CD8-positive, alpha-beta T cell (primary cell): ENCODE measurements at regions of chr15 and their contacts with region 1.

Region 1: DNA sequence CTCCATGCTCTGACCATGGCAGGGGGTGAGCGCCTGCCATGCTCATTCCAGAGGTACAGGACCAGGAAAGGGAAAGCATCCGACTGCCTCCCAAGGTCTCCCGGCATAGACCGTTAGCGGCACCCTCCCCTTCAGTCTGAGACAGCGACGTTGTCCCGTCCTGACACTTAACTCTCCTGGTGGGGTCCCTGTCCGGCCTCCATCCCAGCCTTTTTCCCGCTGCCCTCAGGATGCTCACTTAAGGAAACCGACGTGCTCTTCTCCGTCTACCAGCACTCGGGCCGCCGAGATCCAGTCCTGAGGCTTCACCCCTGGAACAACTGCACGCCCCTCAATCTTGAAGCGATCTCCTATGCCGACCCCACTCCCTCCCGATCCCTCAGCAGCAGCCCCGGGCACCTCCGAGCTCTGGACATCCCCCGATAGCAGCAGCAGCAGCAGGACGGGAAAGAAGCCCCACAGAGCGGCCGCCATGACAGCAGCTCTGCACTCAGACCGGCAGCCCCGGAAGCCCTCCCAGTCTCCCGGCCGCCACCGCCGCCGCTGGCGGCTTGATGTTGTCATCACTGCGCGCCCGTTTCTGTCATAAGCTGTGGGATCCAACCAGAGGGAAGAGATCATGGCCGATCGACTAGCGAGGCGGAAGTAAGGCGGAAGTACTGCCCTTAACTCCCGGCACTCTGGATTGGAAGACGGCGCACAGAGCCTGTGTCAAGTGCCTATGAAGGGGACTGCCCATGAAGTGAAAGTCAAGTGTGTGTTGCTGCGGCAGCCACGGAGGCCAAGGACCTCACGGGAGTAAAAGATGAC is at the starts of genes EMC7 and PGBD4:
- DNase-seq: peak; percentile 98 to 100 (median 99)
- ATAC-seq: peak; percentile 96
- H3K4me3 ChIP-seq: peak within 1 kb of the TSS; percentile 88 to 97
- H3K4me3 Mint-ChIP-seq: peak within 1 kb of the TSS; percentile 97
- H3K27ac ChIP-seq: peak within 1 kb of the TSS; percentile 95 to 97
- H3K27ac Mint-ChIP-seq: peak within 1 kb of the TSS; percentile 96
- H3K4me1 ChIP-seq: peaks cover 29% of the 10 kb centered on the region
- H3K4me1 Mint-ChIP-seq: peaks cover 40% of the 10 kb centered on the region
- H3K27me3 ChIP-seq: no peaks in the 10 kb centered on the region
- H3K27me3 Mint-ChIP-seq: no peaks in the 10 kb centered on the region
- CTCF ChIP-seq: no peak
- total RNA-seq, gene EMC7: 61.0 to 78.9 TPM
- total RNA-seq, gene PGBD4: 1.8 to 2.4 TPM

Region 2: DNA sequence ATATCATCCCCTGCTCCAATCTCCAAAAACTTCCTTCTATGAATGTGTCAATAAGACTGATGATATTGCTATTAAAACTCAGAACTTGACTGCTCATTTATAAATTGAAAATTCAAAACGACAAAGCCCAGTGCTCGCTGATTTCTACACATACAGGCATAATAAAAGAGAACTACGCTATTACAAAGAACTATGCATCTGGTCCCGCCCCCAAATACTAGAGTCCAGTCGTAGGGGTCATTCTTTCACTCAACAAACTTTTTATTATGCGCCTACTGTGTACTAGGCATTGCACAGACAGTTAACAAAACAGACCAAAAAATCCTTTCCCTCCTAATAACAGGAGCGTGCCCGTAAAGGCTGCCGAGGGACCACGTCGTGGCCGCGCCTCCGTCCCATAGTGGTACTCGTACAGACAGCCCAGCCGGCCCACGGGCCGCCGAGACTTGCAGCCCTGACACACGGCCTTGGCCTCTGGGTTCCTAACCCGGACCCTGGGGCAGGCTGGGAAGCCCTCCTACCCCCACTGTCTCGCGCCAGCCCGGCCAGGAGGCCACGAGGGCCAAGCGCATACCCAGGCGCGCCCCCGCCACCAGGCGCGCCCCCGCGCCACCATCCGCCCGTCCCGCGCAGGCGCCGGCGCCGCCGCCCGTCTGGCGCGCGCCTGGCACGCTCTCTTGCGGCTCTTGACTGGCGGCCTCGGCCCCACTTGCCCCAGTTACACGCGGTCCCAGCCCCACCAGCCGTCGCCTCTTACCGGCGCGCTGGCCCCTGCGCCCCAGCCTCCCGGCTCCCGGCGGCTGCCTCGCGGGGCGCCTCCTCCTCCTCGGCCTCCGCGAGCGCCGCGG is 63.3 kb before region 1 on chr15:
- CTCF ChIA-PET with region 1: no interaction called
- POLR2A ChIA-PET with region 1: interaction called, 14 read pairs
- intact Hi-C with region 1: loop called (anchors 1 to 2 kb)
- DNase-seq: peak; percentile 44 to 89 (median 73)
- ATAC-seq: peak; percentile 84
- H3K4me3 ChIP-seq: peak overlapping the region; percentile 78 to 97
- H3K4me3 Mint-ChIP-seq: peak overlapping the region; percentile 94
- H3K27ac ChIP-seq: peak overlapping the region; percentile 75 to 88
- H3K27ac Mint-ChIP-seq: peak overlapping the region; percentile 94
- H3K4me1 ChIP-seq: peaks cover 19% of the 10 kb centered on the region
- H3K4me1 Mint-ChIP-seq: peaks cover 20% of the 10 kb centered on the region
- H3K27me3 ChIP-seq: no peaks in the 10 kb centered on the region
- H3K27me3 Mint-ChIP-seq: no peaks in the 10 kb centered on the region
- CTCF ChIP-seq: no peak

Region 3: DNA sequence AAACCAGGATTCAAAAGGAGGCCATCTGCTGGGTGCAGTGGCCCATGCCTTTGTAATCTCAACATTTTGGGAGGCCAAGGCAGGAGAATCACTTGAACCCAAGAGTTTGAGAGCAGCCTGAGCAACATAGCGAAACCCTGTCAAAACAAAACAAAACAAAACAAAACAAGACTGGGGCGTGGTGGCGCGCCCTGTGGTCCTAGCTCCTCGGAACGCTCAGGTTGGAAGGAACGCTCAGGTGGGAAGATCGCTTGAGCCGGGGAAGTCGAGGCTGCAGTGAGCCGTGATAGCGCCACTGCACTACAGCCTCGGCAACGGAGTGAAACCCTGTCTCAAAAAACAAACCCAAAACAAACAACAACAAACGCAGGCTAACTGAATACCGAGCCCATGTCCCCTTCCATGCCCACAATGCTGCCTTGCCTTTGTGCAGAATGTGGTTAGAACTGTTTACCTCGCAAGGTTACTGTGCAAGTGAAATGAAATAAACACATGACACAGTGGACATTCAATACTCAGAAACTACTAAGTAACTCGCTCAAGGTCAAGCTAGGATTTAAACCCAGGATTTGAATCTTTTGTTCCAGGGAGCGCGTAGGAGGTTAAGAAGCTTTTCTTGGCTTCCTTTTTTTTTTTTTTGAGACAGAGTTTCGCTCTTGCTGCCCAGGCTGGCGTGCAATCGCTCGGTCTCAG is 122.5 kb after region 1 on chr15:
- CTCF ChIA-PET with region 1: interaction called, 3 read pairs
- POLR2A ChIA-PET with region 1: interaction called, 18 read pairs
- intact Hi-C with region 1: loop called (anchors 1 kb)
- DNase-seq: peak in 2 of 9 experiments; percentile 11 to 34
- ATAC-seq: no peak
- H3K4me3 ChIP-seq: peak overlapping the region; percentile 53 to 86
- H3K4me3 Mint-ChIP-seq: peak overlapping the region; percentile 93
- H3K27ac ChIP-seq: peak overlapping the region; percentile 75 to 93
- H3K27ac Mint-ChIP-seq: peak overlapping the region; percentile 99
- H3K4me1 ChIP-seq: peaks cover 15% of the 10 kb centered on the region
- H3K4me1 Mint-ChIP-seq: peaks cover 29% of the 10 kb centered on the region
- H3K27me3 ChIP-seq: no peaks in the 10 kb centered on the region
- H3K27me3 Mint-ChIP-seq: no peaks in the 10 kb centered on the region
- CTCF ChIP-seq: no peak

Region 4: DNA sequence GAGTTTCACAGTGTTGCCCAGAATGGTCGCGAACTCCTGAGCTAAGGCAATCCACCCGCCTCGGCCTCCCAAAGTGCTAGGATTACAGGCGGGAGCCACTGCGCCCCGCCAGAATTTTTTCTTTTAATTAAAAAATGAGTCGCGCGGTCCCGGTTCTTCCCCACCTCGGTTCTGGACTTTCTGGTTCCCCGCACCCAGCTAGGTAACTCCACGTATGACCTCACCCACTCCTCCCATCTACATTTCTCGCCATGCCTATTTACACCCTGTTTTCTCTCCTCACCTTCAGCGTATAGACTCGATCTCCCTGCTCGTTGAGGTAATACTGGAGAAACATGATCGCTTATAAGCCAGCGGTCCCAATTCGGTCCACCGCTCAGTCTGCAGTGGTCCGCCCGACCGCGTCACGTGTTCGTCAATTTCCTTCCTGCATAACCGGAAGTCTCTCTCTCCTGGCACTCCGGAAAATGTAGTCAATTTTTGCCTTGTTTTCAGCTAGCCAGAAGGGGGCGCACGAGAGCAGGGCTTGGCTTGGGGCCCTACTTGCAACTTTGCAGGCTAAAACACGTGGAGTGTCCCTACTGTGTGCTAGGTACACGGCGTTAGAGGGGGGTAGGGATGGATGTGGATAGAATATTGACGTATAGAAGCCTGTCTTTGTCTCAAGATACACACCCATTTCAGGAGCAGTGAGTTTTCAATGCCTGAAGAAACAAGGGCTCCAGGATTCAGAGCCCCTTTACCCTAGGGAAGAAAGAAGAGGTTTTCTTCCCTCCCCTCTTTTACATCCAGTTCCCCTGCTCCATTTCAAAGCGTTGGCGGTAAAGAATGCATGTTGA is 241.4 kb after region 1 on chr15 and contains the starts of genes NOP10 and NUTM1:
- CTCF ChIA-PET with region 1: interaction called, 4 read pairs
- POLR2A ChIA-PET with region 1: no interaction called
- intact Hi-C with region 1: loop called (anchors 2 kb)
- DNase-seq: peak; percentile 87 to 96 (median 93)
- ATAC-seq: peak; percentile 83
- H3K4me3 ChIP-seq: peak within 1 kb of the TSS; percentile 88 to 90
- H3K4me3 Mint-ChIP-seq: no peak within 1 kb of the TSS
- H3K27ac ChIP-seq: peak within 1 kb of the TSS; percentile 82 to 90
- H3K27ac Mint-ChIP-seq: peak within 1 kb of the TSS; percentile 85
- H3K4me1 ChIP-seq: peaks cover 20% of the 10 kb centered on the region
- H3K4me1 Mint-ChIP-seq: peaks cover 24% of the 10 kb centered on the region
- H3K27me3 ChIP-seq: no peaks in the 10 kb centered on the region
- H3K27me3 Mint-ChIP-seq: no peaks in the 10 kb centered on the region
- CTCF ChIP-seq: peak; percentile 90
- total RNA-seq, gene NOP10: 36.6 to 40.1 TPM
- total RNA-seq, gene NUTM1: not detected

Region 5: GRCh38 chr15:34587717-34588674 is 486.4 kb after region 1 on chr15:
- CTCF ChIA-PET with region 1: no interaction called
- POLR2A ChIA-PET with region 1: interaction called, 3 read pairs
- intact Hi-C with region 1: loop called in 1 of 2 experiments (anchors 5 kb)
- DNase-seq: peak; percentile 23 to 79 (median 62)
- ATAC-seq: peak; percentile 65
- H3K4me3 ChIP-seq: no peak overlapping the region
- H3K4me3 Mint-ChIP-seq: peak overlapping the region; percentile 72
- H3K27ac ChIP-seq: no peak overlapping the region
- H3K27ac Mint-ChIP-seq: peak overlapping the region; percentile 62
- H3K4me1 ChIP-seq: peaks cover 5% of the 10 kb centered on the region
- H3K4me1 Mint-ChIP-seq: peaks cover 8% of the 10 kb centered on the region
- H3K27me3 ChIP-seq: no peaks in the 10 kb centered on the region
- H3K27me3 Mint-ChIP-seq: peaks cover 18% of the 10 kb centered on the region
- CTCF ChIP-seq: peak; percentile 83

Region 6: DNA sequence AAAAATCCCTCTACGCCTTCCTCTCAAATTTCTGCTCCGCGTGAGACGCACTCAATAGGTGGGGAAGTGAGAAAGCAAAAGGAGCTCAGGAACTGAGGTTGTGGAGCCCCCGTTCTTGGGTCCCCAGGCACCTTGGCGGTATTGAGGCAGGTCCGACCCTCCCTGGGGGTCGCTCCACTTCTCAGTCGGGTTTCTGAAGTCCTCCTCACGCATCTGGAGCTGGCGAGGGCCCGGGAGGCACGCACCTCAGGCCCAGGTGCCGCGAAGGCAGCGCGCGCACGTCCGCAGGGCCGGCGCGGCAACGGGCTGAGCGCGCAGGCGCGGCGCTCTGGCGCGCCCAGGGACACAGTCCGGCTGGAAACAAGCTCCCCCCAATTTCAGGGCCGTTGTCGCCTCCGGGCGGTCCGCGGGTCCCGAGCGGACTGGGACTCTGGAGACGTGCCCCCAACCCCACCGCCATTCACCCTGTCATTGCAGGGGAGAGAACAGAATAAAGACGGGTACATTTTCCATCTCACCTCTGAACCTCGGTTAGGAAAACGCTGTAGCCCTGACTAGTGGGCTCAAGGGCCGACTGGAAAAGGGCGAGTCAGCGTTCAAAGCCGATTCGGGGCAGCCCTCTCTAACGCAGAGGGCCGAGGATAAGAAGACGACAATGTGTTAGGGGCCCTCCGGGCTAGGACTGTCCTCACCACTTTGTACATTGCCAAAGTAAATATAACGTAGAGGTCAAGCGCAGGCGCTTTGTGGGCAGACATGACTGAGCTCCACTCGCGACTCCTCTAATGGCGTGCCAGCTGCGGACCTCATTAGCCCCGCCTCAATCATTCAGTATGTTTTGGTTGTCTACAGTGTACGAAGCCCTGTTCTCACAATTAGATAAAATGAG is 886.7 kb after region 1 on chr15 and contains the start of gene ZNF770:
- CTCF ChIA-PET with region 1: no interaction called
- POLR2A ChIA-PET with region 1: no interaction called
- intact Hi-C with region 1: loop called (anchors 2 to 5 kb)
- DNase-seq: peak; percentile 72 to 93 (median 81)
- ATAC-seq: peak; percentile 89
- H3K4me3 ChIP-seq: peak within 1 kb of the TSS; percentile 99 to 100
- H3K4me3 Mint-ChIP-seq: peak within 1 kb of the TSS; percentile 99
- H3K27ac ChIP-seq: peak within 1 kb of the TSS; percentile 95 to 96
- H3K27ac Mint-ChIP-seq: peak within 1 kb of the TSS; percentile 99
- H3K4me1 ChIP-seq: peaks cover 24% of the 10 kb centered on the region
- H3K4me1 Mint-ChIP-seq: peaks cover 45% of the 10 kb centered on the region
- H3K27me3 ChIP-seq: no peaks in the 10 kb centered on the region
- H3K27me3 Mint-ChIP-seq: peaks cover 1% of the 10 kb centered on the region
- CTCF ChIP-seq: no peak
- total RNA-seq, gene ZNF770: 32.9 to 37.7 TPM